H1 (cell line): ENCODE measurements at regions of chr20 and their contacts with region 1.

Region 1: GRCh38 chr20:5168651-5169396 is 42.0 kb downstream of the CDS2 start:
- DNase-seq: no peak
- H3K4me3 ChIP-seq: no peak overlapping the region
- H3K27ac ChIP-seq: no peak overlapping the region
- H3K4me1 ChIP-seq: peaks cover 8 to 24% (median 14%) of the 10 kb centered on the region in 4 experiments; a peak in 5 of 7 replicates
- H3K27me3 ChIP-seq: no peaks in the 10 kb centered on the region
- CTCF ChIP-seq: no peak
- EP300 ChIP-seq: no peak
- POLR2A ChIP-seq: no peak
- RAD21 ChIP-seq: no peak

Region 2: DNA sequence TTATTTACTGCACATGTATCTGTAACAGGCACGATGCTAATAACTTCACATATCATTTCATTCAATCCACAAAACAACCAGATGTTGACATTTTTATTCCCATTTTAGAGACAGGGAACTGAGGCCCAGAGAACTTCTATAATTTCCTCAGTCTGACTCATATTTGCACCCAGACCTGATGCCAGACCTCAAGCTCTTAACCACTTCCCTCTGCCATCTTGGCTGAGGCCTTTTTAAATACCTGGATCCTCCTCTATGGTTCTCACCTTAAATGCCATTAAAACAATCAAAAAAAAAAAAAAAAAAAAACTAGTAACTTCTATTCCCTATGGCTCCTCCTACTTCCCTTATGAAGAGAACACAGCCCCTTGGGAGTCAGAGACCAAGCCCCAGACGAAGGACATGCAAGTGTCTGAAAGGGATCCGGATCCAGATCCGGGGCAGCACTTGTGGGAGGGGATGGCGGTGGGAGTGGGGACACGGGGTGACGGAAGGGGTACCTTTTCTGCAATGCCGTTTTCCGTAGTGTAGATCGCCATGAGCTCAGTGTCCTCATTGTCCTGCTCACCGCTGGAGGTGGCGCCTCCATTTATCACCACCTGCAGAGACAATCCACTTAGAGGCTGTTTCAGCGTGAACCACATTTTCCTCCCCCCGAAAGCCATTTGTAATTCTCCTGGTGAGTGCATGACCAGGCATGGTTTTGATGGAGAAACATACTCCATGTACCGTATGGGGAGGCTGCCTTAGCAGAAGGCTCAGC is 256.3 kb before region 1 on chr20:
- CTCF ChIA-PET with region 1: no interaction called
- POLR2A ChIA-PET with region 1: no interaction called
- DNase-seq: no peak
- H3K4me3 ChIP-seq: no peak overlapping the region
- H3K27ac ChIP-seq: no peak overlapping the region
- H3K4me1 ChIP-seq: peaks cover 0 to 4% (median 1%) of the 10 kb centered on the region in 4 experiments; a peak in 2 of 7 replicates
- H3K27me3 ChIP-seq: no peaks in the 10 kb centered on the region
- CTCF ChIP-seq: no peak
- EP300 ChIP-seq: no peak
- POLR2A ChIP-seq: no peak
- RAD21 ChIP-seq: no peak

Region 3: DNA sequence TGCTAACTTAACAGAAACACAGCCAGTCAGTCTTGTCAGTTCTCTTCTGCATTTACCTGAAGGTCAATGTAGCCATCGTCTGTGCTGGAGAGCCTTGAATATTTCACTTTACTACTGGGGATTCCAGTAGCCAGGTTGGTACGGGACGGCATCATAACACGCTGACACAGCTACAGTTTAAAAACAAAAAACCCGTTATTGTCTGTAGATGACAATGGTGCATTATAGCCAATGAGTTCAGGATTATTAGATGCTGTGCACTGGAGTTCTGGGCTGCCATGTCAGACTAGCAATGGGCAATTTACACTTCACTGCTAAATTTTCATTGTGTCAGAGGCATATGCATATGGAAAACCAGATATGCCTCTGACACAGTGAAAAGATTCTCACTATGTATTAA is 59.5 kb before region 1 on chr20:
- CTCF ChIA-PET with region 1: no interaction called
- POLR2A ChIA-PET with region 1: no interaction called
- DNase-seq: no peak
- H3K4me3 ChIP-seq: no peak overlapping the region
- H3K27ac ChIP-seq: no peak overlapping the region
- H3K4me1 ChIP-seq: no peaks in the 10 kb centered on the region
- H3K27me3 ChIP-seq: no peaks in the 10 kb centered on the region
- CTCF ChIP-seq: no peak
- EP300 ChIP-seq: no peak
- POLR2A ChIP-seq: no peak
- RAD21 ChIP-seq: no peak

Region 4: DNA sequence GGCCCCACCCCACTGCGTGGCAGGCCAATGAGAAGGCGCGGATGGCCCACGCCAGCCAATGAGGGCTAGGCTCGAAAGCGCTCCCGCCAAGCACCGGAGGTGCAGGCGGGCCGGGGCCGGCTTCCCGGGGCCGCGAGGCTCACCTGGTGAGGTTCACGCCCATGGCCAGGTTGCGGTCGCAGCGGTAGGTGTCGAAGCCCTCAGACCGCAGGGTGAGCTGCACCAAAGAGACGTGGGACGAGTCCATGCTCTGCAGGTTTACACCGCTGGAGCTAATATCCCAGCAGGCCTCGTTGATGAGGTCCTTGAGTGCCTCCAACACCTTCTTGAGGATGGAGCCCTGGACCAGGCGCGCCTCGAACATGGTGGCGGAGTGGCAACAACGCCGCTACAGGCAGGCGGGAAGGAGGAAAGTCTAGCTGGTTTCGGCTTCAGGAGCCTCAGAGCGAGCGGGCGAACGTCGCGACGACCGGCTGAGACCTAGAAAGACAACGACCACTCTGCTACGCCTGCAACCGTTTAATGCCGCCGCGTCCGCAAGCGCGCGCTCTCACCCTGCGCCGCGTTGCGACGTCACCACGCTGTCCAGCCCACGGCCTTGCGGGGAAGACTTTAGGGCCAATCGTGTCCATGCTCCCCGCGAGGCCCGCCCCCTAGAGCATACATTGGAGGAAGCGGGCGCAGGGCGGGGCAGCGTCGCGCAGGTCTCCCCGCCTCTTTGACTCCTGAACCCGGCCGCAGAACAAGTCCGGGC is 49.2 kb before region 1 on chr20 and contains the start of gene PCNA:
- CTCF ChIA-PET with region 1: interaction called, 3 read pairs
- POLR2A ChIA-PET with region 1: interaction called, 10 read pairs
- DNase-seq: peak; percentile 92 to 93
- H3K4me3 ChIP-seq: peak within 1 kb of the TSS; percentile 91 to 99 (median 96)
- H3K27ac ChIP-seq: peak within 1 kb of the TSS; percentile 99
- H3K4me1 ChIP-seq: peaks cover 0 to 1% (median 0%) of the 10 kb centered on the region in 4 experiments; a peak in 1 of 7 replicates
- H3K27me3 ChIP-seq: no peaks in the 10 kb centered on the region
- CTCF ChIP-seq: no peak
- EP300 ChIP-seq: no peak
- POLR2A ChIP-seq: peak; percentile 99 to 100
- RAD21 ChIP-seq: no peak
- total RNA-seq, gene PCNA: 286 and 290 TPM in 2 replicates

Region 5: DNA sequence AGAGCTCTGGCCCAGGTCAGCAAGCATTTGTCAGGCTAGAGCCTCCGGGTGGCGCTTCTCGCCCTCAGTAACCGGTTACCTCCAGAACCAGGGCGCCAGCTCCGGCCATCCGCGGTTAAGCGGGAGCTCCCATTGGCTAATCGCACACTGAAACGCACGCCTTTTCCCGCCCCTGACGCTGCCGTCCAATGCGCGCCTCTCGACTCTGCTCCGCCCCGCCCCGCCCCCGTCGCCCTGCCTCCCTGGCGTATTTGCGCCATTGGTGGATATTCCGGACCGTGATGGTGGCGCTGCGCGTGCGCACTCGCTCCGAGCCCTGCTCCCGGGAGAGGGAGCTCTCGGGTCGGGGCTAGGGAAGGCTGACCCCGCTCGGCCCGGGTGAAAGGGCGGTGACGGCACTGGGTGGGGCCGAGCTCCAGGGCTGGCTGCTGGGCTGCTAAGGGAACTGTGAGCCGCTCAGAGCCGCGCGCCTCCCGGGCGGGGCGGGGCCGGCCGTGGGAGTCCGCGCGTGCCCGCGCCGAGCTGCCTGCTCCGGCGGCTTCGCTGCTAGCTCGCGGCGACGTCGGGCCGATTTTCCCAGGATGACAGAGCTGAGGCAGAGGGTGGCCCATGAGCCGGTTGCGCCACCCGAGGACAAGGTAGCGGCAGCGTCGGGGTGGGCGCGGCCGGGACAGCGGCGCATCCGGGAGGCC is 42.2 kb before region 1 on chr20 and contains the start of gene CDS2:
- CTCF ChIA-PET with region 1: interaction called, 8 read pairs
- POLR2A ChIA-PET with region 1: interaction called, 10 read pairs
- DNase-seq: peak; percentile 98 to 100
- H3K4me3 ChIP-seq: peak within 1 kb of the TSS; percentile 74 to 86 (median 83)
- H3K27ac ChIP-seq: peak within 1 kb of the TSS; percentile 72
- H3K4me1 ChIP-seq: peaks cover 0 to 7% (median 2%) of the 10 kb centered on the region in 4 experiments; a peak in 2 of 7 replicates
- H3K27me3 ChIP-seq: no peaks in the 10 kb centered on the region
- CTCF ChIP-seq: peak; percentile 52 to 74 (median 60)
- EP300 ChIP-seq: no peak
- POLR2A ChIP-seq: peak in 1 of 2 experiments; percentile 75; a peak in 1 of 3 replicates
- RAD21 ChIP-seq: peak; percentile 48 to 58
- total RNA-seq, gene CDS2: 56.2 and 57.0 TPM in 2 replicates

Region 6: DNA sequence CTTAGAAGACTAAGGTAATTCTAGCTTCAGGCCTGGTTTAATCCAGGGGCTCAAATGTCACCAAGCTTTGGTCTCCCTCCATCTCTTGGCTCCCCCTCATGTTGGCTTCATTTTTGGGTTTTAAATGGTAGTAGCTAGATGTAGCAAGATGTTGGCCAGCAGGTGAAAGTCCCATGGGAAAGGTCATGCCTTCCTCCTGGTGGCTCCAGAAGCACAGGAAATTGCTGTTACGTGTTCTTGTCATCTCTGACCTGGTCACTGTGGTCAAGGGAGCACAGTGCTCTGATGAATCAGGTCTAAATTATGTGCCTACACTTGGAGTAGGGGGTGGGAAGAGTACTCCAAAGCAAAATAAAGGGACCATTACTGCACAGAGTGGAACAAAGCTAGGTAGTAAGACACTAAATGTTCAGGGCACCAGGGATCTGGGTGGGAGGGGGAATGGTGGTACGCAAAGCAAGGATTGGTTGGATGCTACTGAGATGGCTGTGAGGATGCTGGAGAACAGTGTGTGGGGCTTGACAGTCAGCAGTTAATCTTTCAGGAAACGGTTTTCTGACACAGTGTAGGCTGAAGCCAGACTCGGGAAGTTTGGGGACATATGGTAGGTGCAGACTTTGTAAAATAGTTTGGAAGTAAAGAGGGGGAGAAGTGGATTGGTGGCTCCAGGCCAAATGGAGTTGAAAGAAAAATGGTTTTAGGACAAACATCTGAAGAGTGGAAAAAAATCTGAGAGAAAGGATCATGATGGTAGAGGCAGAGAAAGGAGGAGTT is 12.0 kb before region 1 on chr20:
- CTCF ChIA-PET with region 1: interaction called, 15 read pairs
- POLR2A ChIA-PET with region 1: interaction called, 12 read pairs
- DNase-seq: no peak
- H3K4me3 ChIP-seq: no peak overlapping the region
- H3K27ac ChIP-seq: no peak overlapping the region
- H3K4me1 ChIP-seq: no peaks in the 10 kb centered on the region
- H3K27me3 ChIP-seq: no peaks in the 10 kb centered on the region
- CTCF ChIP-seq: no peak
- EP300 ChIP-seq: no peak
- POLR2A ChIP-seq: no peak
- RAD21 ChIP-seq: no peak

Region 7: GRCh38 chr20:5180933-5181332 is 12.1 kb after region 1 on chr20:
- CTCF ChIA-PET with region 1: interaction called, 10 read pairs
- POLR2A ChIA-PET with region 1: interaction called, 8 read pairs
- DNase-seq: no peak
- H3K4me3 ChIP-seq: no peak overlapping the region
- H3K27ac ChIP-seq: no peak overlapping the region
- H3K4me1 ChIP-seq: peaks cover 4 to 16% (median 10%) of the 10 kb centered on the region in 4 experiments; a peak in 5 of 7 replicates
- H3K27me3 ChIP-seq: no peaks in the 10 kb centered on the region
- CTCF ChIP-seq: no peak
- EP300 ChIP-seq: no peak
- POLR2A ChIP-seq: no peak
- RAD21 ChIP-seq: no peak

Region 8: GRCh38 chr20:5298811-5299210 is 130.0 kb after region 1 on chr20:
- CTCF ChIA-PET with region 1: no interaction called
- POLR2A ChIA-PET with region 1: no interaction called
- DNase-seq: no peak
- H3K4me3 ChIP-seq: no peak overlapping the region
- H3K27ac ChIP-seq: no peak overlapping the region
- H3K4me1 ChIP-seq: no peaks in the 10 kb centered on the region; a peak in 1 of 7 replicates
- H3K27me3 ChIP-seq: no peaks in the 10 kb centered on the region
- CTCF ChIP-seq: no peak
- EP300 ChIP-seq: no peak
- POLR2A ChIP-seq: no peak
- RAD21 ChIP-seq: no peak